MCF 10A (cell line): ENCODE measurements at regions of chr6 and their contacts with region 1.

Region 1: GRCh38 chr6:137641474-137642077 is 147.4 kb upstream of the OLIG3 start:
- DNase-seq: peak; percentile 87
- H3K4me3 Mint-ChIP-seq: no peak overlapping the region
- H3K27ac Mint-ChIP-seq: no peak overlapping the region
- H3K4me1 Mint-ChIP-seq: peaks cover 16% of the 10 kb centered on the region
- H3K27me3 Mint-ChIP-seq: no peaks in the 10 kb centered on the region
- CTCF ChIP-seq: peak; percentile 80

Region 2: GRCh38 chr6:136967876-136968752 is 673.5 kb before region 1 on chr6:
- CTCF ChIA-PET with region 1: interaction called, 5 read pairs
- POLR2A ChIA-PET with region 1: no interaction called
- intact Hi-C with region 1: loop called (anchors 5 kb)
- DNase-seq: peak; percentile 85
- H3K4me3 Mint-ChIP-seq: no peak overlapping the region
- H3K27ac Mint-ChIP-seq: no peak overlapping the region
- H3K4me1 Mint-ChIP-seq: peaks cover 5% of the 10 kb centered on the region
- H3K27me3 Mint-ChIP-seq: no peaks in the 10 kb centered on the region
- CTCF ChIP-seq: peak; percentile 51

Region 3: DNA sequence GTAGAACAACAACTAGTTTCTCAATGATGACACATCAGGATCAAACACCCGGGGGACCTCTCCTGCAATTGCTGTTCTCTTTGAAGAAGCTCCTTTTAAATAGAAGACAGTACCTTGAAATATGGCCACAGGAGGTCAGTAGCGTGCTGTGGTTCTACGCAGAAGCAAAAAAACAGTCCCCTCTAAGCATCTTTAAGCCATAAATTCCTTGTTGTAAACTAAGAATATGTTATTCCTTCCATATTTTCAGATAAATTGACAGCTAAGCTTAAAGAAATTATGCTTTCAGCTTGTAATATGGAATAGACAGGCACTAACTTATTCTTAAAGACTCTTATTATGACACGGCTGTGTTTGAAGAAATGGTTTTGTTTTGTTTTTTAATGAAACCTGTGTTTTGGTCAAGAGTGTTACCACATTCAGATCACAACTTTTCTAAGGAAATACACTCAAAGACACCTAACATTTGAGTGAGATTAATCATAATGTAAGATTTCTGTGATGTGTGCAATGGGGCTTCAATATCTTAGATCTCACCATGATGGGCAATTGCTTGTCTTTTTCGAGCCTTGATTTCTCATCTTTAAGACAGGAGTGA is 547.1 kb before region 1 on chr6:
- CTCF ChIA-PET with region 1: interaction called, 5 read pairs
- POLR2A ChIA-PET with region 1: no interaction called
- intact Hi-C with region 1: loop called (anchors 1 kb)
- DNase-seq: peak; percentile 81
- H3K4me3 Mint-ChIP-seq: no peak overlapping the region
- H3K27ac Mint-ChIP-seq: no peak overlapping the region
- H3K4me1 Mint-ChIP-seq: peaks cover 9% of the 10 kb centered on the region
- H3K27me3 Mint-ChIP-seq: no peaks in the 10 kb centered on the region
- CTCF ChIP-seq: peak; percentile 65

Region 4: DNA sequence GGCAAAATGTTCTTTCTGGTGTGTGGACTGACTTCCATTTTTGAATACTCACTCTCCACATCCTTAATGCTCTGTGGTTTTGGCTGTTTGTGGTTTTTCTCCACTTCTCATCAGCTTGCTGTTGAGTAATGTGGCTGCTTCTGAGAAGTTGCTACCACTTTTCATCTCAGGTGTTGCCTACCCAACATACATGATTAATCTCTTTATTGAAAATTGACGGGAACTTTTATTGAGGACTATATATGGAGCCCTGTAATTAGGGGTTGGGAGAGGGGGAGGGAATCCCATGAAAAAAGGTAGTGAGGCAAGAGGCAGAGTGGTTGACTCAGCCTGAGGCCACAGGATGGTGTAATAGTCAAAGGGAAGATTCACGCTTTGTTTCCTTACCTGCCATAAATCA is 485.7 kb before region 1 on chr6:
- CTCF ChIA-PET with region 1: no interaction called
- POLR2A ChIA-PET with region 1: no interaction called
- intact Hi-C with region 1: loop called (anchors 5 kb)
- DNase-seq: peak; percentile 93
- H3K4me3 Mint-ChIP-seq: peak overlapping the region; percentile 59
- H3K27ac Mint-ChIP-seq: peak overlapping the region; percentile 85
- H3K4me1 Mint-ChIP-seq: peaks cover 53% of the 10 kb centered on the region
- H3K27me3 Mint-ChIP-seq: no peaks in the 10 kb centered on the region
- CTCF ChIP-seq: no peak

Region 5: GRCh38 chr6:137313928-137314855 is 327.4 kb before region 1 on chr6:
- CTCF ChIA-PET with region 1: interaction called, 4 read pairs
- POLR2A ChIA-PET with region 1: no interaction called
- intact Hi-C with region 1: loop called (anchors 1 kb)
- DNase-seq: peak; percentile 76
- H3K4me3 Mint-ChIP-seq: no peak overlapping the region
- H3K27ac Mint-ChIP-seq: no peak overlapping the region
- H3K4me1 Mint-ChIP-seq: peaks cover 18% of the 10 kb centered on the region
- H3K27me3 Mint-ChIP-seq: no peaks in the 10 kb centered on the region
- CTCF ChIP-seq: peak; percentile 67